ENCODE measurements at regions of chr9 and their contacts with region 1.

Region 1: GRCh38 chr9:84681516-84682285 is 12.2 kb downstream of the NTRK2 start:
- DNase-seq: no peak
- ATAC-seq: no peak
- H3K4me3 ChIP-seq: no peak overlapping the region
- H3K27ac ChIP-seq: no peak overlapping the region
- H3K4me1 ChIP-seq: no peaks in the 10 kb centered on the region
- H3K27me3 ChIP-seq: peaks cover 5% of the 10 kb centered on the region
- CTCF ChIP-seq: no peak

Region 2: GRCh38 chr9:84953797-84954705 is 272.4 kb after region 1 on chr9:
- intact Hi-C with region 1: loop called (anchors 10 kb)
- DNase-seq: peak; percentile 87
- ATAC-seq: peak; percentile 97
- H3K4me3 ChIP-seq: no peak overlapping the region
- H3K27ac ChIP-seq: no peak overlapping the region
- H3K4me1 ChIP-seq: no peaks in the 10 kb centered on the region
- H3K27me3 ChIP-seq: no peaks in the 10 kb centered on the region
- CTCF ChIP-seq: peak; percentile 88

Measured in upper lobe of right lung (tissue), 1 donor.